CD8-positive, alpha-beta memory T cell (primary cell): ENCODE measurements at regions of chr14 and their contacts with region 1.

Region 1: DNA sequence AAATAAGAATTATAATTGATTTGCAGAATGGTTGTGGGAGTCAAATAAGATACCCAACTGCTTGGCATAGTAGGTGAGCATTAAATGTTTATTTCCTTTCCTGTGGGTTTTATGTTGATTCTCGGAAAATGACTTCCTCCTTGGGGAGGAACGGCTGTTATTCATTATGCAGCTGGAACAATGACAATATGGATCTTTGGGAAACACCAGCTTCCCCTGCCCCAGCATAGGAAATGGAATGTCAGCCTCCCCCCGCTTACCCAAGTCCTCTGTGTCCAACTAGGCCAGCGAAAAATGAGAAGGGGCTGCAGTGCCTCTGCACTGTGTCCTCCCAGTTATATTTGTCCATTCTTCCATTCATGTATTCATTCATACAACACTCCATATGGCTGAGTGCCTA is 11.7 kb upstream of the CCDC177 start:
- DNase-seq: no peak
- H3K4me3 ChIP-seq: no peak overlapping the region
- H3K4me3 Mint-ChIP-seq: no peak overlapping the region
- H3K27ac ChIP-seq: no peak overlapping the region
- H3K27ac Mint-ChIP-seq: no peak overlapping the region
- H3K4me1 ChIP-seq: no peaks in the 10 kb centered on the region
- H3K4me1 Mint-ChIP-seq: no peaks in the 10 kb centered on the region
- H3K27me3 ChIP-seq: no peaks in the 10 kb centered on the region
- H3K27me3 Mint-ChIP-seq: peaks cover 4 to 5% of the 10 kb centered on the region in 2 donors

Region 2: GRCh38 chr14:69519204-69520100 is 67.0 kb before region 1 on chr14:
- CTCF ChIA-PET with region 1: no interaction called
- POLR2A ChIA-PET with region 1: no interaction called
- DNase-seq: no peak
- H3K4me3 ChIP-seq: no peak overlapping the region
- H3K4me3 Mint-ChIP-seq: no peak overlapping the region
- H3K27ac ChIP-seq: no peak overlapping the region
- H3K27ac Mint-ChIP-seq: peak overlapping the region in 1 of 8 donors; percentile 56
- H3K4me1 ChIP-seq: no peaks in the 10 kb centered on the region
- H3K4me1 Mint-ChIP-seq: no peaks in the 10 kb centered on the region
- H3K27me3 ChIP-seq: peaks cover 3% of the 10 kb centered on the region
- H3K27me3 Mint-ChIP-seq: peaks cover 8 to 35% of the 10 kb centered on the region in 2 donors

Region 3: DNA sequence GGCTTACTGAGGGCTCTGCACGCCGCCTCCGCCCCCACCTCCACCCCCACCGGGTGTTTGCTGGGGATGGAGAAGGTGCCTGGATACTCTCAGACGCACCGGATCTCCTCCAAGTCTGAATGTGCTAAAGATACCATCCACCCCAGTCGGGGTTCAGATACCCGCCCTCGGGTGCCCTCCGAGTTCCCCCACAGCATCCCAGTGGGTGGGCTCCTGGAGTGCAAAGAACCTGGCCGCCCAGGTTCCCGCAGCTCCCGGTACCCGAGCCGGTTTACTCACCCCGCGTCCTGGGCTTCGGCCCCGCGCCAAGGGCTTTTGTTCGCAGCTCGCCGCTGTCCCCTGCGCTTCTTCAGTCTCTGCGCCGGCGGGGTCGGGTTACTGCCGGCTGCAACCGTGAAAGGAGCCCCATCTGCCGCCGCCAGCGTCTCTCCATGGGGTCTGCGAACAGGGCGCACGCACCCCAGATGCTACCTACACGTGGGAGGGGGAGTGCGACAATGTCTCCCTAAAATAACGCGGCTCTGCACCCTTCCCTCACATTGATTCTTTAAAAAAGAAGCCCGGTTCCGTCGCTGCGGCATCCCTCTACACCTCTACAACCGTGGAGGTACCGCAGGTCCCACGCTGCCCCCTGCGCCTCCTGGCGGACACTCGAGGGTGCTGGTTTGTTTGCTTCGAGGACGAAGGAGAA is 12.0 kb before region 1 on chr14 and contains the start of gene CCDC177:
- CTCF ChIA-PET with region 1: interaction called, 18 read pairs
- POLR2A ChIA-PET with region 1: no interaction called
- DNase-seq: peak; percentile 52 to 74 (median 60)
- H3K4me3 ChIP-seq: peak within 1 kb of the TSS; percentile 17
- H3K4me3 Mint-ChIP-seq: peak within 1 kb of the TSS; percentile 72 to 93 (median 83)
- H3K27ac ChIP-seq: no peak within 1 kb of the TSS
- H3K27ac Mint-ChIP-seq: peak within 1 kb of the TSS in 2 of 8 donors; percentile 17 to 34
- H3K4me1 ChIP-seq: peaks cover 7% of the 10 kb centered on the region
- H3K4me1 Mint-ChIP-seq: peaks cover 5 to 14% (median 8%) of the 10 kb centered on the region in 3 donors
- H3K27me3 ChIP-seq: peaks cover 20% of the 10 kb centered on the region
- H3K27me3 Mint-ChIP-seq: peaks cover 29 to 53% of the 10 kb centered on the region in 2 donors
- total RNA-seq, gene CCDC177: not detected

Region 4: GRCh38 chr14:69719501-69719951 is 133.1 kb after region 1 on chr14:
- CTCF ChIA-PET with region 1: interaction called, 11 read pairs
- POLR2A ChIA-PET with region 1: no interaction called
- DNase-seq: no peak
- H3K4me3 ChIP-seq: no peak overlapping the region
- H3K4me3 Mint-ChIP-seq: no peak overlapping the region
- H3K27ac ChIP-seq: no peak overlapping the region
- H3K27ac Mint-ChIP-seq: peak overlapping the region in 1 of 8 donors; percentile 32
- H3K4me1 ChIP-seq: peaks cover 14% of the 10 kb centered on the region
- H3K4me1 Mint-ChIP-seq: peaks cover 20 to 24% (median 22%) of the 10 kb centered on the region in 3 donors
- H3K27me3 ChIP-seq: no peaks in the 10 kb centered on the region
- H3K27me3 Mint-ChIP-seq: peaks cover 0 to 2% of the 10 kb centered on the region in 2 donors

Region 5: GRCh38 chr14:69726761-69727511 is 140.5 kb after region 1 on chr14:
- CTCF ChIA-PET with region 1: interaction called, 50 read pairs
- POLR2A ChIA-PET with region 1: no interaction called
- DNase-seq: peak; percentile 76 to 83 (median 78)
- H3K4me3 ChIP-seq: peak overlapping the region; percentile 51
- H3K4me3 Mint-ChIP-seq: peak overlapping the region; percentile 10 to 87 (median 78)
- H3K27ac ChIP-seq: peak overlapping the region; percentile 43
- H3K27ac Mint-ChIP-seq: peak overlapping the region; percentile 51 to 97 (median 88)
- H3K4me1 ChIP-seq: peaks cover 11% of the 10 kb centered on the region
- H3K4me1 Mint-ChIP-seq: peaks cover 20 to 36% (median 28%) of the 10 kb centered on the region in 3 donors
- H3K27me3 ChIP-seq: no peaks in the 10 kb centered on the region
- H3K27me3 Mint-ChIP-seq: no peaks in the 10 kb centered on the region